ENCODE measurements at regions of chr14 and their contacts with region 1.

Region 1: GRCh38 chr14:49461529-49462401 is 124.4 kb downstream of the RPS29 start:
- DNase-seq: peak; percentile 63 to 68 (median 67)
- H3K4me3 ChIP-seq: no peak overlapping the region
- H3K4me3 Mint-ChIP-seq: no peak overlapping the region
- H3K27ac ChIP-seq: no peak overlapping the region
- H3K27ac Mint-ChIP-seq: no peak overlapping the region
- H3K4me1 ChIP-seq: no peaks in the 10 kb centered on the region
- H3K4me1 Mint-ChIP-seq: no peaks in the 10 kb centered on the region
- H3K27me3 ChIP-seq: no peaks in the 10 kb centered on the region
- H3K27me3 Mint-ChIP-seq: peaks cover 2 to 3% of the 10 kb centered on the region in 2 donors

Region 2: DNA sequence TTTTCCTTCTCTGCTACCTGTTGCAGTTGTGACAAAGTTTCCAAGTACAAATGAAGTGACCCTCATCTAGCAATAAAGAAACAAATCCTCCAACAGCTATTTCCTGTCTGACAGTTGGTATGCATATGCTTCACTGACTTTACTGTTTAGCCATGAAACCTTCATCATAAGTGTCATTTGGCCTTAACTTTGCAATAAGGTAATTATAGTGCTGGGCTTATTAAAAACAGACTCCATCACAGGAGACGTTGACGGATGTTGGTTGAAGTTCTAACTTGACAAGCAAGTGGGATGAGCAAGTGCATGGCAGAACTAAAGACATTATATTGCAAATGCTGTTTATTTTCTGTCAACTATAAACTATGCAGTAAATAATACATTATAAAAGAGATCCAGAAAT is 300.8 kb before region 1 on chr14:
- CTCF ChIA-PET with region 1: no interaction called
- POLR2A ChIA-PET with region 1: no interaction called
- intact Hi-C with region 1: no loop called
- DNase-seq: no peak
- H3K4me3 ChIP-seq: no peak overlapping the region
- H3K4me3 Mint-ChIP-seq: no peak overlapping the region
- H3K27ac ChIP-seq: no peak overlapping the region
- H3K27ac Mint-ChIP-seq: no peak overlapping the region
- H3K4me1 ChIP-seq: no peaks in the 10 kb centered on the region
- H3K4me1 Mint-ChIP-seq: no peaks in the 10 kb centered on the region
- H3K27me3 ChIP-seq: no peaks in the 10 kb centered on the region
- H3K27me3 Mint-ChIP-seq: no peaks in the 10 kb centered on the region

Region 3: GRCh38 chr14:49418789-49419188 is 43.0 kb before region 1 on chr14:
- CTCF ChIA-PET with region 1: no interaction called
- POLR2A ChIA-PET with region 1: no interaction called
- intact Hi-C with region 1: no loop called
- DNase-seq: no peak
- H3K4me3 ChIP-seq: no peak overlapping the region
- H3K4me3 Mint-ChIP-seq: no peak overlapping the region
- H3K27ac ChIP-seq: no peak overlapping the region
- H3K27ac Mint-ChIP-seq: no peak overlapping the region
- H3K4me1 ChIP-seq: no peaks in the 10 kb centered on the region
- H3K4me1 Mint-ChIP-seq: no peaks in the 10 kb centered on the region
- H3K27me3 ChIP-seq: peaks cover 4% of the 10 kb centered on the region
- H3K27me3 Mint-ChIP-seq: peaks cover 12 to 19% of the 10 kb centered on the region in 2 donors

Region 4: DNA sequence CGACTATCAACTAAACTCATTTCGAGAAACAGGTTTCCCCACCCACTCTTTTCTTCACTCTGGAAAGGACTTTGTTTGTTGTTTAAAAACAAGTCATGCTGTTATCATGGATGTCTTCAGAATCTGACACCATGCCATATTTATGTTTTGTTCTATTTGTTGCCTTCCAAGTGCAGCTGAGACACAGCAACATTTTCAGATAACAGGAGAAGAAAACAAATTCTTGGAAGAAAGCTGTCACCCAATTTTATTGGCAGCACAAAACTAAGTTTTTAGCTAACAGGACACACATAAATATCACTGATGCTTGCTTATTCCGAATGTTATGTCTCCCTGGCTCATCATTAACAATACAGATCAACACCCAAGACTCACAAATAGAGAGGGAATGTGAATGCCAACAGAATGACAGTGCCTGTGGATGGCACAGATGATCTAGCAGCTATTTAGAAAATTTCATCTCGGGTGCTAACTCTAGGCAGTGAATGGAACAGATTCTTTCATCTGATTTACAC is 23.5 kb before region 1 on chr14:
- CTCF ChIA-PET with region 1: interaction called, 10 read pairs
- POLR2A ChIA-PET with region 1: no interaction called
- intact Hi-C with region 1: no loop called
- DNase-seq: no peak
- H3K4me3 ChIP-seq: no peak overlapping the region
- H3K4me3 Mint-ChIP-seq: no peak overlapping the region
- H3K27ac ChIP-seq: no peak overlapping the region
- H3K27ac Mint-ChIP-seq: no peak overlapping the region
- H3K4me1 ChIP-seq: no peaks in the 10 kb centered on the region
- H3K4me1 Mint-ChIP-seq: peaks cover 0 to 2% (median 0%) of the 10 kb centered on the region in 4 donors
- H3K27me3 ChIP-seq: no peaks in the 10 kb centered on the region
- H3K27me3 Mint-ChIP-seq: peaks cover 14 to 19% of the 10 kb centered on the region in 2 donors

Region 5: GRCh38 chr14:49483268-49483667 is 21.5 kb after region 1 on chr14:
- CTCF ChIA-PET with region 1: interaction called, 16 read pairs
- POLR2A ChIA-PET with region 1: no interaction called
- intact Hi-C with region 1: no loop called
- DNase-seq: no peak
- H3K4me3 ChIP-seq: no peak overlapping the region
- H3K4me3 Mint-ChIP-seq: no peak overlapping the region
- H3K27ac ChIP-seq: no peak overlapping the region
- H3K27ac Mint-ChIP-seq: no peak overlapping the region
- H3K4me1 ChIP-seq: no peaks in the 10 kb centered on the region
- H3K4me1 Mint-ChIP-seq: peaks cover 0 to 4% (median 0%) of the 10 kb centered on the region in 4 donors
- H3K27me3 ChIP-seq: no peaks in the 10 kb centered on the region
- H3K27me3 Mint-ChIP-seq: peaks cover 10 to 12% of the 10 kb centered on the region in 2 donors

Region 6: GRCh38 chr14:49585803-49586672 is 124.3 kb after region 1 on chr14 and contains the start of gene RPS29:
- CTCF ChIA-PET with region 1: interaction called, 17 read pairs
- POLR2A ChIA-PET with region 1: interaction called, 8 read pairs
- intact Hi-C with region 1: loop called (anchors 1 kb)
- DNase-seq: peak; percentile 98 to 99 (median 99)
- H3K4me3 ChIP-seq: peak within 1 kb of the TSS; percentile 93 to 98
- H3K4me3 Mint-ChIP-seq: peak within 1 kb of the TSS; percentile 87 to 98 (median 95)
- H3K27ac ChIP-seq: peak within 1 kb of the TSS; percentile 95
- H3K27ac Mint-ChIP-seq: peak within 1 kb of the TSS; percentile 88 to 100 (median 99)
- H3K4me1 ChIP-seq: peaks cover 38% of the 10 kb centered on the region
- H3K4me1 Mint-ChIP-seq: peaks cover 29 to 62% (median 42%) of the 10 kb centered on the region in 4 donors
- H3K27me3 ChIP-seq: no peaks in the 10 kb centered on the region
- H3K27me3 Mint-ChIP-seq: peaks cover 0 to 4% of the 10 kb centered on the region in 2 donors
- total RNA-seq, gene RPS29: 3,602 to 3,749 TPM

Region 7: DNA sequence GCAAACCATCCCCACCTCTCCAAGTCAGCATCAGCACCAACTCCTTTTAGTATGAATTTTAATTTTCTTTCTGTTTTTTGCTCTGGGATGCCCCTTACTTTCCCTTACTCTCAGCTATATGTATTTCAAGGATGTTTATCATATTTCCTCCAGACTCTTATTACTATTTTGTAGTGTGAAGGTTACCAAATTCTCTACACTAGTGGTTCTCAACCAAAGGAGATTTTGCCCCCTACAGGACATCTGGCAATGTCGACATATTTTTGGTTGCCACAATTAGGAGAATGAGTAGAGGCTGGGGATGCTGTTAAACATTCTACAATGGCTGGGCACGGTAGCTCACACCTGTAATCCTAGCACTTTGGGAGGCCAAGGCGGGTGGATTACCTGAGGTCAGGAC is 798.7 kb after region 1 on chr14:
- CTCF ChIA-PET with region 1: no interaction called
- POLR2A ChIA-PET with region 1: no interaction called
- intact Hi-C with region 1: loop called (anchors 10 kb)
- DNase-seq: peak in 4 of 5 donors; percentile 22 to 34 (median 30)
- H3K4me3 ChIP-seq: no peak overlapping the region
- H3K4me3 Mint-ChIP-seq: no peak overlapping the region
- H3K27ac ChIP-seq: no peak overlapping the region
- H3K27ac Mint-ChIP-seq: peak overlapping the region in 1 of 7 donors; percentile 19
- H3K4me1 ChIP-seq: no peaks in the 10 kb centered on the region
- H3K4me1 Mint-ChIP-seq: peaks cover 0 to 4% (median 2%) of the 10 kb centered on the region in 4 donors
- H3K27me3 ChIP-seq: no peaks in the 10 kb centered on the region
- H3K27me3 Mint-ChIP-seq: no peaks in the 10 kb centered on the region